ENCODE measurements at regions of chr17 and their contacts with region 1.

Region 1: DNA sequence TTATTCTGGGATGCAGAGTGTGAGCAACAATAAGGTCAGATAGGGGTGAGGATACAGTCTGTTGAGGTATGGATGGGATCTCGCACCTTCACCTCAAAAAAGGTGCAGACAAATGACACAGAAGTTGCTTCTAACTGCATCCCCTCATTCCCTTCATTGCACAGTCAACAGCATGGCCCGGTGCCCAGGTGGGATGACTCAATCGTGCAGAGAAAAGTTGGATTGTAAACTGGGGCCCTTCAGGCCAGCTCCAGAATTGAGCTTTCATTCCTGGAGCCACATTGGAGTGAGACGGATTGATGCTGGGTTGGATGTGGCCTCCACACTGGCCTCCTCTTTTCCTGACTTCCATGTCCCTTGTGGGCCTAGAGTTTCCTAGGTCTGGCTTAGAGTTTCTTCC is 977.4 kb downstream of the KCNJ18 start:
- DNase-seq: no peak
- ATAC-seq: no peak
- H3K4me3 ChIP-seq: no peak overlapping the region
- H3K27ac ChIP-seq: no peak overlapping the region
- H3K4me1 ChIP-seq: no peaks in the 10 kb centered on the region
- H3K27me3 ChIP-seq: no peaks in the 10 kb centered on the region
- CTCF ChIP-seq: no peak
- EP300 ChIP-seq: no peak
- POLR2A ChIP-seq: no peak
- RAD21 ChIP-seq: no peak

Region 2: GRCh38 chr17:22600644-22601303 is 68.9 kb before region 1 on chr17:
- CTCF ChIA-PET with region 1: no interaction called
- POLR2A ChIA-PET with region 1: no interaction called
- RAD21 ChIA-PET with region 1: no interaction called
- SMC1A ChIA-PET with region 1: no interaction called
- in situ Hi-C with region 1: loop called (anchors 10 kb)
- intact Hi-C with region 1: no loop called
- DNase-seq: no peak
- ATAC-seq: no peak
- H3K4me3 ChIP-seq: no peak overlapping the region
- H3K27ac ChIP-seq: no peak overlapping the region
- H3K4me1 ChIP-seq: no peaks in the 10 kb centered on the region
- H3K27me3 ChIP-seq: no peaks in the 10 kb centered on the region
- CTCF ChIP-seq: peak in 1 of 3 experiments; percentile 3; a peak in 1 of 6 replicates
- EP300 ChIP-seq: no peak
- POLR2A ChIP-seq: no peak
- RAD21 ChIP-seq: no peak

Region 3: GRCh38 chr17:22654447-22654846 is 15.3 kb before region 1 on chr17:
- CTCF ChIA-PET with region 1: no interaction called
- POLR2A ChIA-PET with region 1: no interaction called
- RAD21 ChIA-PET with region 1: no interaction called
- SMC1A ChIA-PET with region 1: no interaction called
- in situ Hi-C with region 1: no loop called
- intact Hi-C with region 1: no loop called
- DNase-seq: no peak
- ATAC-seq: no peak
- H3K4me3 ChIP-seq: no peak overlapping the region
- H3K27ac ChIP-seq: no peak overlapping the region
- H3K4me1 ChIP-seq: no peaks in the 10 kb centered on the region
- H3K27me3 ChIP-seq: no peaks in the 10 kb centered on the region
- CTCF ChIP-seq: no peak
- EP300 ChIP-seq: no peak
- POLR2A ChIP-seq: no peak
- RAD21 ChIP-seq: no peak

Measured in GM12878 (cell line).